ENCODE measurements at regions of chr10 and their contacts with region 1.

Region 1: GRCh38 chr10:75235375-75236177 is at the start of gene COMTD1:
- DNase-seq: peak; percentile 97
- ATAC-seq: peak; percentile 46
- H3K4me3 Mint-ChIP-seq: peak within 1 kb of the TSS; percentile 66
- H3K27ac Mint-ChIP-seq: no peak within 1 kb of the TSS
- H3K4me1 Mint-ChIP-seq: peaks cover 22% of the 10 kb centered on the region
- H3K27me3 Mint-ChIP-seq: no peaks in the 10 kb centered on the region; the same call in 1 of the 2 replicates
- CTCF ChIP-seq: peak; percentile 100
- total RNA-seq, gene COMTD1: 46.3 to 49.5 TPM (median 47.8 TPM) in 3 replicates

Region 2: GRCh38 chr10:75019370-75019769 is 216.2 kb before region 1 on chr10:
- CTCF ChIA-PET with region 1: interaction called, 14 read pairs
- POLR2A ChIA-PET with region 1: no interaction called
- DNase-seq: no peak
- ATAC-seq: peak; percentile 18; the same call in 1 of the 2 replicates
- H3K4me3 Mint-ChIP-seq: no peak overlapping the region
- H3K27ac Mint-ChIP-seq: no peak overlapping the region
- H3K4me1 Mint-ChIP-seq: peaks cover 19% of the 10 kb centered on the region
- H3K27me3 Mint-ChIP-seq: no peaks in the 10 kb centered on the region
- CTCF ChIP-seq: no peak

Region 3: DNA sequence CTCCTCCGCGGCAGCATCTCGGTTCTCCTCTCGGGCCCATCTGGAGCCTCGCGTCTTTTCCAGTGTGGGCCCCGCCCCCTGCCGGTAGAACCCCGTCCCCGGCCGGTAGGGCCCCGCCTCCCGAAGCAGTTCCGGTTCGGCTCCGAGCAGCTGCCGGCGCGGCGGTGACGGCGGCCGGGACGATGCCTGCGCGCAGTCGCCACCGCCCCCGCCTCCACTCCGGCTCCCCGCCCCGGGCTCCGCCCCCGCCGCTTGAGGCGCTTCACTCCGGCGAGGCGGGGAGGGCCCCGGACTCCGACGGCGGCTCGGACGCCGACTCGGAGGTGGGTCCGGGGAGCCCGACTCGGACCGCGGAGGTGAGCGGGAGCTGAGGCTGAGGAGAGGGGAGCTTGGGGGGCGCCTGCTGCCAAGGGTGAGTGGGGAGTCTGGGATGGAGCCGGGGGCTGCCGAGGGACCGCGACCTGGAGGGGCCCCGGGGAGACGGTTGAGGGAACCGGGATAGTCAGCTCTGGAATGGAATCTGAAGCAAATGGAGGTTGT is 124.1 kb before region 1 on chr10 and contains the start of gene SAMD8:
- CTCF ChIA-PET with region 1: interaction called, 40 read pairs
- POLR2A ChIA-PET with region 1: interaction called, 4 read pairs
- DNase-seq: peak; percentile 98
- ATAC-seq: no peak
- H3K4me3 Mint-ChIP-seq: peak within 1 kb of the TSS; percentile 97
- H3K27ac Mint-ChIP-seq: peak within 1 kb of the TSS; percentile 99
- H3K4me1 Mint-ChIP-seq: peaks cover 53% of the 10 kb centered on the region
- H3K27me3 Mint-ChIP-seq: no peaks in the 10 kb centered on the region
- CTCF ChIP-seq: peak; percentile 44; the same call in 1 of the 2 replicates
- total RNA-seq, gene SAMD8: 20.9 to 23.0 TPM (median 21.7 TPM) in 3 replicates

Region 4: DNA sequence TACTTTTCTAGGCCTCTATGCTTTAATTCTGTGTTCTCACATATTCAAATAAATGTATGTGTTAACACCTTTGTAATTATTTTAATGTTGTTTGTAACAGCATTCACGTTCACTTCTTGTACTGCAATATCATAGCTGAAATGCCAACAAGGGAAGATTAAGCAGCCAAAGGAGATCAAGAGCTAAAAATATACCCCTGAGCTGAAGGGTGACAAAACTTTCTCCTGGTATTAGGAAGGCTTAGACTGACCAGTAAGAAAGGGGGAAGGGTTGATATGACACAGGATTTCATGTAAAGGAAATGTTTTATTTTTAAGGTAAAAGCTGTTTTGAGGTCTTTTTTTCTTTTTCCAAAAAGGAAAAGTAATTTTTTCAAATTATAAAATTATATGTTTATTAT is 65.4 kb before region 1 on chr10:
- CTCF ChIA-PET with region 1: no interaction called
- POLR2A ChIA-PET with region 1: no interaction called
- DNase-seq: no peak
- ATAC-seq: no peak
- H3K4me3 Mint-ChIP-seq: no peak overlapping the region
- H3K27ac Mint-ChIP-seq: peak overlapping the region; percentile 76; the same call in 1 of the 2 replicates
- H3K4me1 Mint-ChIP-seq: peaks cover 8% of the 10 kb centered on the region
- H3K27me3 Mint-ChIP-seq: no peaks in the 10 kb centered on the region
- CTCF ChIP-seq: no peak

Region 5: DNA sequence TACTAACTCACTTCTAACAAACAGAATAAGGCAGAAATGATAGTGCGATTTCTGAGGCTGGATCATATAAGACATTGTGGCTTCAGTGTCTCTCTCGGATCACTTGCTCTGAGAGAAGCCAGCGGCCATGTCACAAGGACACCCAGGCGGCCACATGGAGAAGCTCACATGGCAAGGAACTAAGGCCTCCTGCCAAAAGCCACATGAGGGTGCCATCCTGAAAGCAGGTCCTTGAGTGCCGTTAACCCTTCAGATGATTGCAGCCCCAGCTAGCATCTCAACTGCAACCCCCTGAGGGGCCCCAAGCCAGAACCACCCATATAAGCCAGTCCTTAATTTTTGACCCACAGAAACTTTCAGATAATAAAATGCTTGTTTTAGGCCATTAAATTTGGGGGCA is 31.9 kb before region 1 on chr10:
- CTCF ChIA-PET with region 1: interaction called, 10 read pairs
- POLR2A ChIA-PET with region 1: interaction called, 3 read pairs
- DNase-seq: no peak
- ATAC-seq: peak; percentile 72
- H3K4me3 Mint-ChIP-seq: no peak overlapping the region
- H3K27ac Mint-ChIP-seq: 0 out of 2 replicates have a peak overlapping the region, but pooled peaks have one; percentile 66
- H3K4me1 Mint-ChIP-seq: peaks cover 22% of the 10 kb centered on the region
- H3K27me3 Mint-ChIP-seq: no peaks in the 10 kb centered on the region
- CTCF ChIP-seq: no peak

Region 6: GRCh38 chr10:75245491-75246250 is 10.1 kb after region 1 on chr10:
- CTCF ChIA-PET with region 1: interaction called, 16 read pairs
- POLR2A ChIA-PET with region 1: no interaction called
- DNase-seq: no peak
- ATAC-seq: peak; percentile 31
- H3K4me3 Mint-ChIP-seq: no peak overlapping the region
- H3K27ac Mint-ChIP-seq: no peak overlapping the region
- H3K4me1 Mint-ChIP-seq: peaks cover 14% of the 10 kb centered on the region
- H3K27me3 Mint-ChIP-seq: no peaks in the 10 kb centered on the region
- CTCF ChIP-seq: no peak

Region 7: GRCh38 chr10:75319274-75319673 is 83.7 kb after region 1 on chr10:
- CTCF ChIA-PET with region 1: no interaction called
- POLR2A ChIA-PET with region 1: no interaction called
- DNase-seq: no peak
- ATAC-seq: no peak
- H3K4me3 Mint-ChIP-seq: no peak overlapping the region
- H3K27ac Mint-ChIP-seq: no peak overlapping the region
- H3K4me1 Mint-ChIP-seq: no peaks in the 10 kb centered on the region
- H3K27me3 Mint-ChIP-seq: no peaks in the 10 kb centered on the region; the same call in 1 of the 2 replicates
- CTCF ChIP-seq: no peak